ENCODE measurements at regions of chr18 and their contacts with region 1.

Region 1: GRCh38 chr18:55390898-55391297 is 197.1 kb downstream of the TCF4 start:
- DNase-seq: no peak
- ATAC-seq: no peak

Region 2: GRCh38 chr18:55152801-55153200 is 238.1 kb before region 1 on chr18:
- intact Hi-C with region 1: no loop called
- DNase-seq: no peak
- ATAC-seq: no peak

Region 3: GRCh38 chr18:55343396-55344073 is 47.4 kb before region 1 on chr18:
- intact Hi-C with region 1: loop called (anchors 10 kb)
- DNase-seq: no peak
- ATAC-seq: peak; percentile 65

Measured in Right ventricle myocardium superior (tissue), 1 donor.